H1 (cell line): ENCODE measurements at regions of chr6 and their contacts with region 1.

Region 1: GRCh38 chr6:90413867-90414266 is 117.2 kb upstream of the BACH2 start:
- DNase-seq: peak in 1 of 2 experiments; percentile 58
- H3K4me3 ChIP-seq: peak overlapping the region in 1 of 4 experiments; percentile 5; a peak in 1 of 8 replicates
- H3K27ac ChIP-seq: no peak overlapping the region
- H3K4me1 ChIP-seq: peaks cover 0 to 12% (median 7%) of the 10 kb centered on the region in 4 experiments; a peak in 5 of 7 replicates
- H3K27me3 ChIP-seq: no peaks in the 10 kb centered on the region
- CTCF ChIP-seq: no peak
- EP300 ChIP-seq: no peak
- POLR2A ChIP-seq: no peak
- RAD21 ChIP-seq: no peak

Region 2: DNA sequence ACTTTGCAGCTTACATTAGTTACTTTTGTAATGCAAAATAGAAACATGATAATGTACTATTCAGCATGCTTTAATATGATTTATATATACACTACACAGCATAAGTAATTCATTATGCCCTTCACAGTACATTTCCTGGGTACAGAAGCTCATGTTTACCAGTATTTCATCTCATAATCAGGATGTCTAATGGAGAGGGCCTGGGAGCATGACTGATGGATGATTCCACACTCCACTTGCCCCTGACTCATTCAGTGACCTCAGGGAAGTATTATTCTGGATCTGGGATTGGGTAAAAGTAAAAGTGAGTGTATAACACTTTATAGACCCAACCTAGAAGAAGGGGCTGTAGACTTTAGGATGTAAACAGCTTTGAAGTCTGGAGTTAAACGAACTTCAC is 85.9 kb before region 1 on chr6:
- CTCF ChIA-PET with region 1: no interaction called
- POLR2A ChIA-PET with region 1: no interaction called
- DNase-seq: no peak
- H3K4me3 ChIP-seq: no peak overlapping the region
- H3K27ac ChIP-seq: no peak overlapping the region
- H3K4me1 ChIP-seq: peaks cover 0 to 6% (median 2%) of the 10 kb centered on the region in 4 experiments; a peak in 4 of 7 replicates
- H3K27me3 ChIP-seq: no peaks in the 10 kb centered on the region
- CTCF ChIP-seq: no peak
- EP300 ChIP-seq: no peak
- POLR2A ChIP-seq: no peak
- RAD21 ChIP-seq: no peak

Region 3: GRCh38 chr6:90425161-90425641 is 11.3 kb after region 1 on chr6:
- CTCF ChIA-PET with region 1: interaction called, 12 read pairs
- POLR2A ChIA-PET with region 1: interaction called, 4 read pairs
- DNase-seq: no peak
- H3K4me3 ChIP-seq: no peak overlapping the region
- H3K27ac ChIP-seq: no peak overlapping the region
- H3K4me1 ChIP-seq: no peaks in the 10 kb centered on the region
- H3K27me3 ChIP-seq: no peaks in the 10 kb centered on the region
- CTCF ChIP-seq: no peak
- EP300 ChIP-seq: no peak
- POLR2A ChIP-seq: no peak
- RAD21 ChIP-seq: no peak

Region 4: GRCh38 chr6:90572856-90573255 is 159.0 kb after region 1 on chr6:
- CTCF ChIA-PET with region 1: no interaction called
- POLR2A ChIA-PET with region 1: no interaction called
- DNase-seq: no peak
- H3K4me3 ChIP-seq: no peak overlapping the region
- H3K27ac ChIP-seq: no peak overlapping the region
- H3K4me1 ChIP-seq: no peaks in the 10 kb centered on the region
- H3K27me3 ChIP-seq: peaks cover 0 to 2% (median 0%) of the 10 kb centered on the region in 4 experiments; a peak in 2 of 7 replicates
- CTCF ChIP-seq: no peak
- EP300 ChIP-seq: no peak
- POLR2A ChIP-seq: no peak
- RAD21 ChIP-seq: no peak